GM12878 (cell line): ENCODE measurements at regions of chr14 and their contacts with region 1.

Region 1: GRCh38 chr14:44961604-44962333 is at the starts of genes KLHL28 and TOGARAM1:
- DNase-seq: peak; percentile 100
- ATAC-seq: peak; percentile 85
- H3K4me3 ChIP-seq: peak within 1 kb of the TSS; percentile 95
- H3K27ac ChIP-seq: peak within 1 kb of the TSS; percentile 78
- H3K4me1 ChIP-seq: no peaks in the 10 kb centered on the region
- H3K27me3 ChIP-seq: no peaks in the 10 kb centered on the region
- CTCF ChIP-seq: no peak
- EP300 ChIP-seq: peak in 1 of 2 experiments; percentile 63; a peak in 1 of 4 replicates
- POLR2A ChIP-seq: peak; percentile 93
- RAD21 ChIP-seq: no peak
- polyA plus RNA-seq, gene KLHL28: 4.3 to 9.3 TPM
- polyA plus RNA-seq, gene TOGARAM1: 2.1 to 2.6 TPM

Region 2: DNA sequence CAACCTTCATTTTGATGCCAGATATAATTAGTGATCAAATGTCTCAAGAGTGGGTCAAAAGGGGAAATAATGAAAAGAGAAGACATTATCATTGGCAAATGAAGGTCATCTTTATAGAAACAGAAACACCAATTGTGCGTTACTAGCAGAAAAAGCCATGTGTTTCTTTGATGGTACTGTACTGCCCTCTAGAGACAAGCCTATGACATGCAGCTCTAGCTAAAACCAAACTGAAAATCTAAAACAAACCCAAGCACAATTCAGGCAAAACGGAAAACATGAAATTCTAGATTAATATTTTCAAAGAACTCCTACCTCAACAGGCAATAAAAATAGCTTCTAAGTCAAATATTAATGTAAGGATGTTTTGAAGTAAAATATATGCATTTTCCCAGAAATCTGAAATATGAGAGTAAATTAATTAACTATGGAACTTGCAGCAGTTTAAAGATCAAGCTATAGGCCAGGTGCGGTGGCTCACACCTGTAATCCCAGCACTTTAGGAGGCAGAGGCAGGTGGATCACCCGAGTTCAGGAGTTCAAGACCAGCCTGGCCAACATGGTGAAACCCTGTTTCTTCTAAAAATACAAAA is 115.4 kb before region 1 on chr14:
- CTCF ChIA-PET with region 1: no interaction called
- POLR2A ChIA-PET with region 1: no interaction called
- RAD21 ChIA-PET with region 1: no interaction called
- SMC1A ChIA-PET with region 1: no interaction called
- in situ Hi-C with region 1: no loop called
- intact Hi-C with region 1: no loop called
- DNase-seq: peak; percentile 27
- ATAC-seq: peak; percentile 79
- H3K4me3 ChIP-seq: no peak overlapping the region
- H3K27ac ChIP-seq: no peak overlapping the region
- H3K4me1 ChIP-seq: no peaks in the 10 kb centered on the region
- H3K27me3 ChIP-seq: no peaks in the 10 kb centered on the region
- CTCF ChIP-seq: peak; percentile 83 to 89 (median 85)
- EP300 ChIP-seq: no peak
- POLR2A ChIP-seq: no peak
- RAD21 ChIP-seq: peak; percentile 83

Region 3: GRCh38 chr14:44897045-44897844 is 64.5 kb before region 1 on chr14:
- CTCF ChIA-PET with region 1: interaction called, 3 read pairs
- POLR2A ChIA-PET with region 1: no interaction called
- RAD21 ChIA-PET with region 1: no interaction called
- SMC1A ChIA-PET with region 1: interaction called, 3 read pairs
- in situ Hi-C with region 1: no loop called
- intact Hi-C with region 1: loop called (anchors 2 kb)
- DNase-seq: peak; percentile 89
- ATAC-seq: peak; percentile 97
- H3K4me3 ChIP-seq: peak overlapping the region; percentile 69
- H3K27ac ChIP-seq: peak overlapping the region; percentile 79
- H3K4me1 ChIP-seq: no peaks in the 10 kb centered on the region
- H3K27me3 ChIP-seq: no peaks in the 10 kb centered on the region
- CTCF ChIP-seq: no peak
- EP300 ChIP-seq: no peak
- POLR2A ChIP-seq: peak; percentile 83
- RAD21 ChIP-seq: no peak

Region 4: DNA sequence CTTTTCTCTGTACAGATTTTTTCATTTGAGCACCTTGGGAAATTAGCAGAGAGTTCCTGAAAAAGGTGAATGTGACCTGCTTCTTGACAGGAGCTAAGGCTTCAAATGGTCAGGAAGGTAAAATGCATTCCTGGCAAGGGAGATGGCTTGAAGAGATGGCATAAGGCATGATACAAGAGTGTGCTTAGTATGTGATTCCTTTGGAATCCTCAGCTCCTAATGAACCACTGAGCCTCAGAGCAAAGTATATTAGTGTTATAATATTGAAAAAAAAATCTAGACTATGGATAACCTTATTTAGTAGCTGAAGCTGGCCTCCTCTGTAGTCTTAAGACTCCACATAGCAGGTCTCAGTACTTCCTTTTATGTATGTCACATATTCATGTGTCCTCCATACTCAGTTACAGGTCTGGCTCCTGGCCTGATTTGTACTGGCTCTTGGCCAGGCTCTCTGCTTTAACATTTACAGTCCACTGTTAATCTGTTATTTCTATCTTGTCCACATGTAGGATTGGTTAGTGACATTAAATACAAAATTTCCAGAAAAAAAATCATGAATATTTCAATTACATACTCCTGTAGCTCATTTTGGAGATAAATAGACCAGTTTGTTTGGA is 18.1 kb after region 1 on chr14:
- CTCF ChIA-PET with region 1: interaction called, 8 read pairs
- POLR2A ChIA-PET with region 1: interaction called, 14 read pairs
- RAD21 ChIA-PET with region 1: interaction called, 5 read pairs
- SMC1A ChIA-PET with region 1: interaction called, 6 read pairs
- in situ Hi-C with region 1: no loop called
- intact Hi-C with region 1: no loop called
- DNase-seq: no peak
- ATAC-seq: peak; percentile 50
- H3K4me3 ChIP-seq: no peak overlapping the region
- H3K27ac ChIP-seq: no peak overlapping the region
- H3K4me1 ChIP-seq: no peaks in the 10 kb centered on the region
- H3K27me3 ChIP-seq: no peaks in the 10 kb centered on the region
- CTCF ChIP-seq: no peak
- EP300 ChIP-seq: no peak
- POLR2A ChIP-seq: no peak
- RAD21 ChIP-seq: no peak

Region 5: GRCh38 chr14:45083971-45084722 is 122.4 kb after region 1 on chr14 and contains the start of gene PRPF39:
- CTCF ChIA-PET with region 1: interaction called, 3 read pairs
- POLR2A ChIA-PET with region 1: interaction called, 44 read pairs
- RAD21 ChIA-PET with region 1: interaction called, 4 read pairs
- SMC1A ChIA-PET with region 1: interaction called, 16 read pairs
- in situ Hi-C with region 1: no loop called
- intact Hi-C with region 1: loop called (anchors 2 kb)
- DNase-seq: peak; percentile 84
- ATAC-seq: peak; percentile 92
- H3K4me3 ChIP-seq: peak within 1 kb of the TSS; percentile 99
- H3K27ac ChIP-seq: peak within 1 kb of the TSS; percentile 88
- H3K4me1 ChIP-seq: peaks cover 11% of the 10 kb centered on the region
- H3K27me3 ChIP-seq: no peaks in the 10 kb centered on the region
- CTCF ChIP-seq: no peak
- EP300 ChIP-seq: no peak
- POLR2A ChIP-seq: peak; percentile 99
- RAD21 ChIP-seq: no peak
- polyA plus RNA-seq, gene PRPF39: 22.1 to 22.3 TPM

Region 6: GRCh38 chr14:45089813-45090212 is 128.0 kb after region 1 on chr14:
- CTCF ChIA-PET with region 1: interaction called, 3 read pairs
- POLR2A ChIA-PET with region 1: interaction called, 44 read pairs
- RAD21 ChIA-PET with region 1: interaction called, 4 read pairs
- SMC1A ChIA-PET with region 1: interaction called, 16 read pairs
- in situ Hi-C with region 1: no loop called
- intact Hi-C with region 1: loop called (anchors 2 kb)
- DNase-seq: no peak
- ATAC-seq: peak; percentile 71
- H3K4me3 ChIP-seq: peak overlapping the region; percentile 44
- H3K27ac ChIP-seq: peak overlapping the region; percentile 3; the same call in 1 of the 2 replicates
- H3K4me1 ChIP-seq: peaks cover 16% of the 10 kb centered on the region
- H3K27me3 ChIP-seq: no peaks in the 10 kb centered on the region
- CTCF ChIP-seq: no peak
- EP300 ChIP-seq: peak; percentile 16 to 24; a peak in 1 of 4 replicates
- POLR2A ChIP-seq: no peak
- RAD21 ChIP-seq: no peak

Region 7: GRCh38 chr14:45253068-45253753 is 291.4 kb after region 1 on chr14 and contains the start of gene MIS18BP1:
- CTCF ChIA-PET with region 1: interaction called, 5 read pairs
- POLR2A ChIA-PET with region 1: interaction called, 16 read pairs
- RAD21 ChIA-PET with region 1: interaction called, 3 read pairs
- SMC1A ChIA-PET with region 1: interaction called, 3 read pairs
- in situ Hi-C with region 1: loop called (anchors 5 kb)
- intact Hi-C with region 1: loop called (anchors 2 kb)
- DNase-seq: peak; percentile 81
- ATAC-seq: peak; percentile 85
- H3K4me3 ChIP-seq: peak within 1 kb of the TSS; percentile 98
- H3K27ac ChIP-seq: peak within 1 kb of the TSS; percentile 85
- H3K4me1 ChIP-seq: peaks cover 8% of the 10 kb centered on the region
- H3K27me3 ChIP-seq: no peaks in the 10 kb centered on the region
- CTCF ChIP-seq: peak; percentile 80 to 95 (median 90)
- EP300 ChIP-seq: peak in 1 of 2 experiments; percentile 62; a peak in 1 of 4 replicates
- POLR2A ChIP-seq: peak; percentile 82
- RAD21 ChIP-seq: peak; percentile 49
- polyA plus RNA-seq, gene MIS18BP1: 16.9 to 17.7 TPM